Vagina (tissue), 2 donors: ENCODE measurements at regions of chr6 and their contacts with region 1.

Region 1: DNA sequence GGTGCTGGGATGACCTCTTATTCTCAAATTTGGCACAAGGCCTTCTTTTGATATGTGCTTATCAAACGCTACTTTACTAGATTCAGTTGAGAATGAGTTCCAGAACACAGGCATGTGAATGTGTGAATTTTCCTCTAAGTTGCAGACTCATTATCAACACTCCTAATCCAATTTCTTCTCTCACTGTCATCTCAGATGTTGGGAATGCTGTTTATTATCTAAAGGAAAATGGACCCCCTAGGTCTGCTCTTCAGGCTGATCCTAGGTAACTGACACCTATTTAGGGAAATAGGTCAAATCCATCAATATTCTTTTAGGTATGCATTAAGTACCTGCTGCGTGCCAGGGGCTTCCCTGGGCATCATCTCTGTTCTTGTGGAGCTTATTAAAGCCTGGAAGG is 215.0 kb upstream of the NOX3 start:
- DNase-seq: no peak
- H3K4me3 ChIP-seq: no peak overlapping the region
- H3K27ac ChIP-seq: no peak overlapping the region
- H3K4me1 ChIP-seq: no peaks in the 10 kb centered on the region
- H3K27me3 ChIP-seq: no peaks in the 10 kb centered on the region
- CTCF ChIP-seq: no peak
- POLR2A ChIP-seq: no peak

Region 2: GRCh38 chr6:155412335-155412734 is 258.3 kb before region 1 on chr6:
- intact Hi-C with region 1: no loop called
- DNase-seq: no peak
- H3K4me3 ChIP-seq: no peak overlapping the region
- H3K27ac ChIP-seq: no peak overlapping the region
- H3K4me1 ChIP-seq: peaks cover under 1% of the 10 kb centered on the region
- H3K27me3 ChIP-seq: no peaks in the 10 kb centered on the region
- CTCF ChIP-seq: no peak
- POLR2A ChIP-seq: no peak

Region 3: GRCh38 chr6:155687645-155688044 is 17.0 kb after region 1 on chr6:
- intact Hi-C with region 1: loop called (anchors 1 kb)
- DNase-seq: no peak
- H3K4me3 ChIP-seq: no peak overlapping the region
- H3K27ac ChIP-seq: no peak overlapping the region
- H3K4me1 ChIP-seq: no peaks in the 10 kb centered on the region
- H3K27me3 ChIP-seq: no peaks in the 10 kb centered on the region
- CTCF ChIP-seq: no peak
- POLR2A ChIP-seq: no peak

Region 4: GRCh38 chr6:155706341-155706740 is 35.7 kb after region 1 on chr6:
- intact Hi-C with region 1: no loop called
- DNase-seq: no peak
- H3K4me3 ChIP-seq: no peak overlapping the region
- H3K27ac ChIP-seq: no peak overlapping the region
- H3K4me1 ChIP-seq: no peaks in the 10 kb centered on the region
- H3K27me3 ChIP-seq: no peaks in the 10 kb centered on the region
- CTCF ChIP-seq: no peak
- POLR2A ChIP-seq: no peak

Region 5: DNA sequence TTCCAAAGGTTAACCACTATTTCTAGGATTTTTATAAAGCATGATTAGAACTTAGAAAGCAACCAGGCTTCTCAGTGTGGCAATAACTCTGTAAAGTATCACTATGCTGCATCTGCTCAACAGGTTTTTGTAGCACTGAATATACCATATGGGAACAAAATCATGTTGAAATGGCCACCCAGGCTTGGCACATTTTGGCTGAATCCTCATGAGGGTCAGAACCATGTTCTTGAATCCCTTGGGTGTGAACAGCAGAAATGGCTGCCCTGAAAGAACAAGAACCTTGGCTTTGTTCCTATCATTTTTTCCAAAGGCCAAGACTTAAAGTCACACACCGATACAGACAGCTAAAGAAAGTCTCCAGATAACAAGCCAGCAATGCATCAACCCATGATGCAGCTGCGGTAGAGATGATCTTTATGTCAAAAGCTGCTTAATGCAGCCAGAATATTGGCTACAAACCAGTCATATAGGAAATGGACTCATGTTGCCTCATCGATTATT is 68.0 kb after region 1 on chr6:
- intact Hi-C with region 1: no loop called
- DNase-seq: no peak
- H3K4me3 ChIP-seq: no peak overlapping the region
- H3K27ac ChIP-seq: no peak overlapping the region
- H3K4me1 ChIP-seq: no peaks in the 10 kb centered on the region
- H3K27me3 ChIP-seq: no peaks in the 10 kb centered on the region
- CTCF ChIP-seq: no peak
- POLR2A ChIP-seq: no peak